ENCODE measurements at regions of chr17 and their contacts with region 1.

Region 1: GRCh38 chr17:7673239-7673638 is 14.1 kb downstream of the TP53 start:
- DNase-seq: peak; percentile 55
- ATAC-seq: no peak
- H3K4me3 Mint-ChIP-seq: no peak overlapping the region
- H3K27ac Mint-ChIP-seq: no peak overlapping the region
- H3K4me1 Mint-ChIP-seq: no peaks in the 10 kb centered on the region
- H3K27me3 Mint-ChIP-seq: no peaks in the 10 kb centered on the region

Region 2: DNA sequence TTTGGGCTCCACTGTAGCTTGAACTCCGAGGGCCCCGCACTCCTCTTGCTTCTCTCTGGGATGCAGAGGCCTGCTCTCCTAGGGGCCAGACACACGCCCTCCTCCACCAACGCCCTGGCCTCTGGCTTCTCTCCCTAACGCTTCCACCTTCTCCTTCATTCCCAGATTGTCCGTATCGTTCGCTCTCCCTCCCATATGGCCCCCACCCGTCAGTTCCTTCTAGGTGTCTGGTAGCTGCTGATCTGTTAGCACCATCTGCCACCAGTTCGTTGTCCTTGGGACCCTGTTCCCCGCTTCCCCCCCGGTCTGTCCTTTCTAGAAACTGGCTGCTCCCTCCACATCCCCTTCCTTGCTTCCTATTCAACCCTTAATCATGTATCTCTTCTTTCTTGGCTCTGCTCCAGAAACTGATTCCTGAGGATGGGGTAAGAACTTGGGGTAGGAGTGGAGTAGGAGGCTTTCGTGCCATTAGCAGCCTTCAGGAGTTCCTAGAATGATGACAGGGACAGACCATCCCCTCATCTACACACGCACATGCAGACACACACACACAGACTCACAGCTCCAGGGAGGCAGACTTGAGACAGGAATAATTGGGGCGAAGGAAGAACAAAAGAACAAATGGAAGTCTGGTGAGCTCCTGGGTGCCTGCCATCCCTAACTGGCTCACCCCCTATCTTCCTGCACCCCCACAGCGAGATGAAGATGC is 18.3 kb before region 1 on chr17:
- CTCF ChIA-PET with region 1: interaction called, 13 read pairs
- DNase-seq: no peak
- ATAC-seq: no peak
- H3K4me3 Mint-ChIP-seq: no peak overlapping the region
- H3K27ac Mint-ChIP-seq: no peak overlapping the region
- H3K4me1 Mint-ChIP-seq: peaks cover 13% of the 10 kb centered on the region
- H3K27me3 Mint-ChIP-seq: peaks cover 40% of the 10 kb centered on the region

Region 3: GRCh38 chr17:7697828-7698588 is 24.8 kb after region 1 on chr17:
- CTCF ChIA-PET with region 1: no interaction called
- DNase-seq: no peak
- ATAC-seq: no peak
- H3K4me3 Mint-ChIP-seq: no peak overlapping the region
- H3K27ac Mint-ChIP-seq: no peak overlapping the region
- H3K4me1 Mint-ChIP-seq: peaks cover 4% of the 10 kb centered on the region
- H3K27me3 Mint-ChIP-seq: no peaks in the 10 kb centered on the region

Measured in activated CD8-positive, alpha-beta memory T cell treated with anti-CD3 and anti-CD28 coated beads, Interleukin-2, amount 10 ng/mL, durations not matched to agents 7 days and 5 days (primary cell).